Activated naive CD4-positive, alpha-beta T cell treated with anti-CD3 and anti-CD28 coated beads for 36 hours (primary cell): ENCODE measurements at regions of chr1 and their contacts with region 1.

Region 1: DNA sequence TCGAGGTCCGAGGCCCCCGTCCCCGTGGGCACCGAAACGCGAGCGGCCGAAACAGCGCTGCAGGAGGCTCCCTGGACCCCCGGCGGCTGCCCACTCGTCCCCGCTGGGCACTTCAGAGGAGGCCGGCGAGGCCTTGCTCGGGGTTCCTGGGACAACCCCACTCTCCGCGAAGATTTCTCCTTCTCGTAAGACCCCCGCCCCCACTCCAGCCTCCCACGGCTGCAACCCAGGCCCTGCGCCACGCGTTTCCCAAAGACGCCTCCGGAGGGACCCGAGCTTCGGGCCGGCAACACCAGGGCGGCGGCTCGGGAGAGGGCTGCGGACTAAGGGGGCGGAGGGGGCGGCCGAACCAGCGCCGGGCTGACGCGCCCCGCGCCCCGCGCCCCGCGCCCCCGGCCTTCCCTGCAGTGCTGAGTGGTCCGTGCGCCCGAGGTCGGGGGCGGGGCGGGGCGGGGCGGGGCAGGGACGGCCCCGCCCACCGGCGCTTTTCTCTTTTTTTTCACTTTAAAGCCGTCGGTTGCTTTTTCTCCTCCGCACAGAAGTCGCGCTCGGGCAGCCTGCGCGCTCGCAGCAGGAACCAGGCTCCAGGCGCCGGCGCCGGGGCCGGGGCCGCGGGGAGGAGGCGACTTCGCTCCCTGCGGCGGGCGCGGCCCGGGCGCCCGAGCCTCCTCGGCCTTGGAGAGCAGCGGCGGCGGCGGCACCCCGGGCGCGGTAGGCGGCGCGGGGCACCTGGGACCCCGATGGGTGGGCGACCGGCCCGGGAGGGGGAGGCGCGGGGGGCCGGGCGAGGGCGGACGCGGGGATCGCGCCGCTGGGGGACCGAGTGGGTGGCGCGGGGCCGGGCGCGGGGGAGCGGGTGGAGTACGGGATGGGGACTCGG is at the start of gene SPSB1:
- DNase-seq: peak; percentile 73
- H3K4me3 Mint-ChIP-seq: peak within 1 kb of the TSS; percentile 31
- H3K27ac Mint-ChIP-seq: no peak within 1 kb of the TSS
- H3K4me1 Mint-ChIP-seq: peaks cover 23% of the 10 kb centered on the region
- H3K27me3 Mint-ChIP-seq: no peaks in the 10 kb centered on the region
- total RNA-seq, gene SPSB1: 4.8 to 5.0 TPM

Region 2: DNA sequence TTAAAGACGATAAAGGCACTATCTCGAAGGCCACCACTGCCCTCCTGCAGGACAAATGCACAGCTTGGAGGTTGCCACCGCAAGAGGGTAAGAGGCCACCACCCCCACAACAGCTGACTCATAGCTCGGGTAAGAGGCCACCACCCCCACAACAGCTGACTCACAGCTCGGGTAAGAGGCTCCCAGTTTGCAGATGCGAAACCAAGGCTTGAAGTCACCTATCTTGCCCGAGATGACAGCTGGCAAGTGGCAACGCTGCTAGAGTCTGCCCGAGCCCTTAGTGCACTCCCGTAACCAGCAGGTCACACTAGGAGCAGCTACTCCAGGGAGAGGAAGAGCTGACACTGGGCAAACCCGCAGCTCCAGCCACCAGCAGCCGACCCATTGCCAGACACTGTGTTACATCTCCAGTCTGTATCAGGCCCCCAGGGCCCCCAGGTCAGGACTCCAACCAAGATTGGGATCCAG is 17.0 kb before region 1 on chr1:
- CTCF ChIA-PET with region 1: interaction called, 7 read pairs
- intact Hi-C with region 1: loop called (anchors 1 kb)
- DNase-seq: peak; percentile 85
- H3K4me3 Mint-ChIP-seq: no peak overlapping the region
- H3K27ac Mint-ChIP-seq: no peak overlapping the region
- H3K4me1 Mint-ChIP-seq: peaks cover 27% of the 10 kb centered on the region
- H3K27me3 Mint-ChIP-seq: no peaks in the 10 kb centered on the region

Region 3: DNA sequence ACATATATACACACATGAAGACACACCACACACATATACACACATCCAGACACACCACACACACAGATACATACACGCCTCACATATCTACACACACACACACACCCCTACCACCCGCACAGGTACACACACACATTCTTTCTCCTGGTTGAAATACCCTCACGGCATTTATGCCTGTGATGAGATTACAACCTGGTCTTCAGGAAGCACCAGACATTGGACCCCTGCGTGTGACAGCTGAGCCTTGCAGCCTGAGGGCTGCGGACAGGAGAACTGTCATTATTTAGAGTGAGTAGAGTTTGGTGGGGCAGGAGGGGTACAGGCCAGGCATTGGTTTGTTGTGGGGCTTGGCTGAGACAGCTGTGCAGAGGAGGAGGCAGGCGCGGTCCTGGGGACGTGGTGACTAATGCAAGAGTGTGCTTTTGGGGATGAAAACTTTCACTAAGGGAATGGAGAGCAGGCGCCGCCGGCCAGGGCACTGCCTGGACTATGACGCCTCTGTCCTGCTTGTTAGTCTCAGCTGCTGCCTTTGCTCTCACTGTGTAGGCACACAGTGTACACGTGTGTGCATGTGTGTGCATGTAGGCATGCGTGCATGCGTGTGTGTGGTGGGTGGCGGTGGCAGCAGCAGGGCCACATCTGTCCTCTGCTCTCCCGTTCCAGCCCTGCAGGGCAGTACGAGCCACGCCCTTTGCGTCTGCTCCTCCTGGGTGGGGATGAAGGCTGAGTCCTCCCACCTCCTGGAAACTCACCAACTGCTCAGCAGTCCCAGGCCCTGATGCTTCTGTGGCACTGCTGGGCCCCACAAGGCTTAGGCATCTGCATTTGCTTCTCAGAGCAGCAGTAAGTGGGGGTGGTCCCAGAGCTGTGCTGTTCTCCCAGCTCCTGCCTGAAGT is 57.7 kb after region 1 on chr1:
- CTCF ChIA-PET with region 1: no interaction called
- intact Hi-C with region 1: no loop called
- DNase-seq: no peak
- H3K4me3 Mint-ChIP-seq: no peak overlapping the region
- H3K27ac Mint-ChIP-seq: no peak overlapping the region
- H3K4me1 Mint-ChIP-seq: no peaks in the 10 kb centered on the region
- H3K27me3 Mint-ChIP-seq: no peaks in the 10 kb centered on the region

Region 4: GRCh38 chr1:9413148-9413876 is 120.7 kb after region 1 on chr1:
- CTCF ChIA-PET with region 1: interaction called, 5 read pairs
- intact Hi-C with region 1: loop called (anchors 5 kb)
- DNase-seq: peak; percentile 89
- H3K4me3 Mint-ChIP-seq: no peak overlapping the region
- H3K27ac Mint-ChIP-seq: no peak overlapping the region
- H3K4me1 Mint-ChIP-seq: peaks cover 46% of the 10 kb centered on the region
- H3K27me3 Mint-ChIP-seq: no peaks in the 10 kb centered on the region

Region 5: GRCh38 chr1:9455487-9456234 is 163.1 kb after region 1 on chr1:
- CTCF ChIA-PET with region 1: interaction called, 118 read pairs
- intact Hi-C with region 1: loop called (anchors 1 kb)
- DNase-seq: peak; percentile 76
- H3K4me3 Mint-ChIP-seq: no peak overlapping the region
- H3K27ac Mint-ChIP-seq: no peak overlapping the region
- H3K4me1 Mint-ChIP-seq: no peaks in the 10 kb centered on the region
- H3K27me3 Mint-ChIP-seq: no peaks in the 10 kb centered on the region